Activated CD4-positive, alpha-beta memory T cell treated with anti-CD3 and anti-CD28 coated beads, Interleukin-2, amount 10 ng/mL, durations not matched to agents 7 days and 5 days (primary cell): ENCODE measurements at regions of chr9 and their contacts with region 1.

Region 1: GRCh38 chr9:127734747-127735529 is at the start of gene TOR2A:
- DNase-seq: peak; percentile 98
- H3K4me3 Mint-ChIP-seq: peak within 1 kb of the TSS; percentile 79
- H3K27ac Mint-ChIP-seq: peak within 1 kb of the TSS; percentile 82
- H3K4me1 Mint-ChIP-seq: peaks cover 23% of the 10 kb centered on the region
- H3K27me3 Mint-ChIP-seq: no peaks in the 10 kb centered on the region
- total RNA-seq, gene TOR2A: 20.6 to 23.3 TPM

Region 2: DNA sequence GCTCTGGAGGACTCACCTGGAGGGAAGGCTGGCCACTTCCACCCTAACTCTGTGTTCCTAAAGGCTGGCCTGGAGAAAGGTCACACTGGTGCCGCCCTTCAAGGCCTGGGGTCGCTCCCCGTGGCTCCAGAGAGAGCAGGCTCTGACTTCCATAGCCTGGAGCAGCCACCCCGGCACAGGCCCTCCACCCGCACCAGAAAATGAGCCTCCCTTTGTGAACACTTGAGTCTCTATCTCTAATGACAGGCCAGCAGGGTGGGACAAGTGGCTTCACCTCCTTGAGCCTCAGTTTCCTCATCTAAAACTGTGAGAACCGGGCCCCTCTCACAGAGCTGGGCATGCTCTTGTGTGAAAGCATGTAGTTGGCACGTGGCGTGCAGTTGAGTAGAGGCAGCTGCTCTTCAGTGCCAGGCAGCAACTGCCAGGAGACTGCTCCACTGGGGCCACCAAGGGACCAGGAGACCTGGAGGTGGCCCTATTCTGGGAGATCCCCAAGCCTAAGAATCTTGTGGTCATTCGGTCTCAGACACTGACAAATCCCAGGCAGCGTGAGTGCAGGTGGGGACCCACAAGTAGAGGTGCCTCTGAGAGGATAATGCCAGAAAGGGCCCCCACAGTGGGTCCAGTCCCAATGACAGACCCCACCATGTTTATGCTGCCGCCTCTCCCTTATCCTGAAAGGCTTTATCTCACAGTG is 527.1 kb before region 1 on chr9:
- CTCF ChIA-PET with region 1: no interaction called
- POLR2A ChIA-PET with region 1: no interaction called
- DNase-seq: no peak
- H3K4me3 Mint-ChIP-seq: no peak overlapping the region
- H3K27ac Mint-ChIP-seq: no peak overlapping the region
- H3K4me1 Mint-ChIP-seq: no peaks in the 10 kb centered on the region
- H3K27me3 Mint-ChIP-seq: no peaks in the 10 kb centered on the region

Region 3: GRCh38 chr9:127450830-127451724 is 283.9 kb before region 1 on chr9 and contains the starts of genes LRSAM1 and RPL12:
- CTCF ChIA-PET with region 1: interaction called, 9 read pairs
- POLR2A ChIA-PET with region 1: interaction called, 11 read pairs
- DNase-seq: peak; percentile 98
- H3K4me3 Mint-ChIP-seq: peak within 1 kb of the TSS; percentile 84
- H3K27ac Mint-ChIP-seq: peak within 1 kb of the TSS; percentile 97
- H3K4me1 Mint-ChIP-seq: peaks cover 51% of the 10 kb centered on the region
- H3K27me3 Mint-ChIP-seq: no peaks in the 10 kb centered on the region
- total RNA-seq, gene LRSAM1: 25.4 to 26.9 TPM
- total RNA-seq, gene RPL12: 1,379 to 1,395 TPM

Region 4: GRCh38 chr9:127586537-127586936 is 148.4 kb before region 1 on chr9:
- CTCF ChIA-PET with region 1: interaction called, 37 read pairs
- POLR2A ChIA-PET with region 1: interaction called, 3 read pairs
- DNase-seq: peak; percentile 67
- H3K4me3 Mint-ChIP-seq: no peak overlapping the region
- H3K27ac Mint-ChIP-seq: no peak overlapping the region
- H3K4me1 Mint-ChIP-seq: peaks cover 29% of the 10 kb centered on the region
- H3K27me3 Mint-ChIP-seq: peaks cover 11% of the 10 kb centered on the region

Region 5: DNA sequence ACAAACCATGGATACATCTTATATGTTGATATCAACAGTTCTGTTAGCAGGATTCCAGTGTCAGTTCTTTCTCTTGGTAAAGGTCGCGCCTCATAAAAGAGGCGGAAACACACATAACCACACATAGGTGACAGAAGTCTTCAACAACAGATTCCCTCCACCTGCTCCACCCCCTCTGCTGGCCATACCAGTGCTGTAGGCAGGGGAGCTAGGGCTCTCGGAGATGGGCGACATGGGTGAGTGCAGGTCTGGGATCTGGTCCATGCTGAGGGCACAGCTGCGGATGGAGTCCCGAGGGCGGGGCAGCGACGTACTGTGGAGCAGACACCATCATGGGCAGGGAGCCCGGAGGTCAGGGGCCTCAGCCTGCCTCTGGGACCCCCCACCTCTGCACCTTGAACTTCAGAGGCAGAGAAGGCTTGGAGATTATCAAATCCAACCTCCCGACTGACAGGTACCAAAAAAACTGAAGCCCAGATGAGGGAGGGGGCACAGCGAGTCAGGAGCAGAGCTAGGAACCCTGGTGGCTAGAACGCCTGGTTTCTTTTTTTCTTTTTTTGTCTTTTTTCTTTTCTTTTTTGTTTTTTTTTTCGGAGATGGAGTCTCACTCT is 12.1 kb after region 1 on chr9:
- CTCF ChIA-PET with region 1: interaction called, 22 read pairs
- POLR2A ChIA-PET with region 1: no interaction called
- DNase-seq: no peak
- H3K4me3 Mint-ChIP-seq: no peak overlapping the region
- H3K27ac Mint-ChIP-seq: no peak overlapping the region
- H3K4me1 Mint-ChIP-seq: peaks cover 5% of the 10 kb centered on the region
- H3K27me3 Mint-ChIP-seq: no peaks in the 10 kb centered on the region

Region 6: GRCh38 chr9:127785023-127785932 is 50.3 kb after region 1 on chr9:
- CTCF ChIA-PET with region 1: interaction called, 36 read pairs
- POLR2A ChIA-PET with region 1: interaction called, 19 read pairs
- DNase-seq: peak; percentile 93
- H3K4me3 Mint-ChIP-seq: peak overlapping the region; percentile 97
- H3K27ac Mint-ChIP-seq: peak overlapping the region; percentile 93
- H3K4me1 Mint-ChIP-seq: peaks cover 78% of the 10 kb centered on the region
- H3K27me3 Mint-ChIP-seq: no peaks in the 10 kb centered on the region

Region 7: GRCh38 chr9:127903557-127904475 is 168.9 kb after region 1 on chr9:
- CTCF ChIA-PET with region 1: interaction called, 13 read pairs
- POLR2A ChIA-PET with region 1: interaction called, 4 read pairs
- DNase-seq: peak; percentile 90
- H3K4me3 Mint-ChIP-seq: peak overlapping the region; percentile 95
- H3K27ac Mint-ChIP-seq: peak overlapping the region; percentile 100
- H3K4me1 Mint-ChIP-seq: peaks cover 49% of the 10 kb centered on the region
- H3K27me3 Mint-ChIP-seq: no peaks in the 10 kb centered on the region